ENCODE measurements at regions of chr10 and their contacts with region 1.

Region 1: GRCh38 chr10:34985823-34986222 is 104.3 kb downstream of the CUL2 start:
- DNase-seq: peak; percentile 50
- ATAC-seq: peak; percentile 99
- H3K4me3 Mint-ChIP-seq: no peak overlapping the region
- H3K27ac Mint-ChIP-seq: no peak overlapping the region
- H3K4me1 Mint-ChIP-seq: peaks cover 2% of the 10 kb centered on the region
- H3K27me3 Mint-ChIP-seq: no peaks in the 10 kb centered on the region
- CTCF ChIP-seq: no peak

Region 2: DNA sequence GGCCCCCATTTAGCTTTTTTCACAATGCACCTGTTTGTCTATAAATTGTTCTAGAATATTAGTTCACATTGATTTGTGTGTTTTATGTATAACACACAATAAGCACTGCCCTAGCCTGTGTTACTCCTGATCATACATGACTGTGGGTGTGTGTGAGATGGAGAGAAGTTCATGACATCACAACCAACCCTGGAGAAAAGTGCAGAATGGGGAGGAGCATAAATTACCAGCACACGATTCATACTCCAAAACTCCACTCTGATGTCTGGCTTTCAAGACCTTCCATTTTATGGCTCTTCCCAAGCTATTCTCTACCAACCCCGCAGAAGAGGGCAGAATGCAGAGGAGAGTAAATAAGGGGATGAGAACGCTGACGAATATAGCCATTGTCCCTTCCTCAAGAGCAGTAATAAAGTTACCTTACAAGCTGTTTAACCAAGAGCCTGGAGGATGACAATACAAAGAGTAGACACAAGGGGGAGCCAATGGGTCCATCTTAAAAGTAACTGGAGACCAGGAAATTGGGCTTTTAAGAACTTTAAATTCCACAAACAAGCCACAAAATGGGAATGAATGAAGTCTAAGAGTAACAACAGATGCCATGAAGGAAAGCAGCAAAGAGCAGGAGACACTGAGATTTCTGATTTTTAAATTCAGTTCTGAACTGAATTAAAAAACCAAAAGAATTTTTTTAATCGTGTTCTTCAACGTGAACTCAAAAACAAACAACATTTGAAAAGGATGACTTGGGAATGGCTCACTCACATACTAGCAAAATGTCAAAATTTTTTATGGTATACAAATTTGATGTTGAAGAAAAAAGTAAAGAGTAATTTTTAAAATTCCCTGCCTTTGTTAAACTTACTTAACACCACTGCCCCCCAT is 330.3 kb before region 1 on chr10:
- CTCF ChIA-PET with region 1: interaction called, 21 read pairs
- POLR2A ChIA-PET with region 1: no interaction called
- DNase-seq: peak; percentile 57
- ATAC-seq: peak; percentile 48
- H3K4me3 Mint-ChIP-seq: no peak overlapping the region; the same call in 1 of the 2 replicates
- H3K27ac Mint-ChIP-seq: peak overlapping the region; percentile 88
- H3K4me1 Mint-ChIP-seq: peaks cover 89% of the 10 kb centered on the region
- H3K27me3 Mint-ChIP-seq: no peaks in the 10 kb centered on the region
- CTCF ChIP-seq: peak; percentile 64

Region 3: GRCh38 chr10:34677591-34677990 is 308.2 kb before region 1 on chr10:
- CTCF ChIA-PET with region 1: interaction called, 13 read pairs
- POLR2A ChIA-PET with region 1: no interaction called
- DNase-seq: no peak
- ATAC-seq: peak; percentile 58
- H3K4me3 Mint-ChIP-seq: no peak overlapping the region
- H3K27ac Mint-ChIP-seq: no peak overlapping the region
- H3K4me1 Mint-ChIP-seq: peaks cover 37% of the 10 kb centered on the region
- H3K27me3 Mint-ChIP-seq: no peaks in the 10 kb centered on the region
- CTCF ChIP-seq: no peak

Region 4: GRCh38 chr10:34723750-34724149 is 262.1 kb before region 1 on chr10:
- CTCF ChIA-PET with region 1: interaction called, 10 read pairs
- POLR2A ChIA-PET with region 1: no interaction called
- DNase-seq: no peak
- ATAC-seq: peak; percentile 40; the same call in 1 of the 2 replicates
- H3K4me3 Mint-ChIP-seq: no peak overlapping the region
- H3K27ac Mint-ChIP-seq: peak overlapping the region; percentile 48
- H3K4me1 Mint-ChIP-seq: peaks cover 43% of the 10 kb centered on the region
- H3K27me3 Mint-ChIP-seq: no peaks in the 10 kb centered on the region
- CTCF ChIP-seq: no peak